Stomach (tissue), 19 donors: ENCODE measurements at regions of chr18 and their contacts with region 1.

Region 1: GRCh38 chr18:74551936-74552555 is 17.7 kb downstream of the CNDP1 start:
- DNase-seq: peak; percentile 92 to 96
- H3K4me3 ChIP-seq: no peak overlapping the region
- H3K27ac ChIP-seq: no peak overlapping the region
- H3K4me1 ChIP-seq: peaks cover under 1 to 7% (median 1%) of the 10 kb centered on the region in 4 donors
- H3K27me3 ChIP-seq: peaks cover 0 to 17% (median 0%) of the 10 kb centered on the region in 3 donors
- CTCF ChIP-seq: peak in 5 of 7 experiments; percentile 51 to 79 (median 68)
- EP300 ChIP-seq: no peak
- POLR2A ChIP-seq: no peak

Region 2: GRCh38 chr18:74196220-74197119 is 355.6 kb before region 1 on chr18:
- intact Hi-C with region 1: loop called (anchors 10 kb)
- DNase-seq: peak; percentile 54 to 90
- H3K4me3 ChIP-seq: peak overlapping the region in 3 of 4 donors; percentile 11 to 25 (median 25)
- H3K27ac ChIP-seq: peak overlapping the region in 2 of 5 donors; percentile 69 to 84
- H3K4me1 ChIP-seq: peaks cover 8 to 25% (median 18%) of the 10 kb centered on the region in 4 donors
- H3K27me3 ChIP-seq: peaks cover 0 to 28% (median 0%) of the 10 kb centered on the region in 3 donors
- CTCF ChIP-seq: peak in 5 of 7 experiments; percentile 78 to 97 (median 94)
- EP300 ChIP-seq: no peak
- POLR2A ChIP-seq: no peak

Region 3: GRCh38 chr18:74331404-74331803 is 220.6 kb before region 1 on chr18:
- intact Hi-C with region 1: no loop called
- DNase-seq: peak in 1 of 2 donors; percentile 16
- H3K4me3 ChIP-seq: no peak overlapping the region
- H3K27ac ChIP-seq: no peak overlapping the region
- H3K4me1 ChIP-seq: no peaks in the 10 kb centered on the region
- H3K27me3 ChIP-seq: no peaks in the 10 kb centered on the region
- CTCF ChIP-seq: no peak
- EP300 ChIP-seq: no peak
- POLR2A ChIP-seq: no peak

Region 4: DNA sequence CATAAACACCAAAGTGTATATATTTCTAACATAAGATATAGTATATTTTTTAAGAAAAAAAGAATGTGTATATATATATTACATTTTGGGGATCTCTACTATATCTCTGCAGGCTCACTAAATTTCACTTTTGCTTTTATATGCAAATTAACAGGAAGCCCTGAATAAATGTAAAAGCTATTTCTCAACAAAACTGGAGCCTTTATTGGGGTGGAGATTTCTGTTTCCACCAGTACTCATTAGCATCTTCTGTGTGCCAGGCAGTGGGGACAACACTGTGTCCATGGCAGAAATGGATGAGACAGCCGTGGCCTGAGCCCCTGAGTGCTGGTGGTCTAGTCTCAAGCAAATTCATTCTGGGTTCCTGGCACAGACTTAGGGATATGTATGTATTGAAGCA is 195.1 kb before region 1 on chr18:
- intact Hi-C with region 1: loop called (anchors 5 kb)
- DNase-seq: no peak
- H3K4me3 ChIP-seq: no peak overlapping the region
- H3K27ac ChIP-seq: no peak overlapping the region
- H3K4me1 ChIP-seq: no peaks in the 10 kb centered on the region
- H3K27me3 ChIP-seq: peaks cover 0 to 6% (median 0%) of the 10 kb centered on the region in 3 donors
- CTCF ChIP-seq: no peak
- EP300 ChIP-seq: no peak
- POLR2A ChIP-seq: no peak

Region 5: GRCh38 chr18:74645679-74646078 is 93.6 kb after region 1 on chr18:
- intact Hi-C with region 1: no loop called
- DNase-seq: no peak
- H3K4me3 ChIP-seq: no peak overlapping the region
- H3K27ac ChIP-seq: no peak overlapping the region
- H3K4me1 ChIP-seq: peaks cover 0 to 3% (median 0%) of the 10 kb centered on the region in 4 donors
- H3K27me3 ChIP-seq: no peaks in the 10 kb centered on the region
- CTCF ChIP-seq: no peak
- EP300 ChIP-seq: no peak
- POLR2A ChIP-seq: no peak